HepG2 (cell line): ENCODE measurements at regions of chr6 and their contacts with region 1.

Region 1: GRCh38 chr6:31739639-31740396 is at the start of gene MSH5:
- DNase-seq: peak; percentile 100
- ATAC-seq: peak; percentile 74
- H3K4me3 ChIP-seq: peak within 1 kb of the TSS; percentile 44 to 92 (median 92)
- H3K27ac ChIP-seq: peak within 1 kb of the TSS; percentile 99
- H3K4me1 ChIP-seq: peaks cover 50% of the 10 kb centered on the region
- H3K27me3 ChIP-seq: no peaks in the 10 kb centered on the region; a peak in 1 of 5 replicates
- CTCF ChIP-seq: no peak
- EP300 ChIP-seq: no peak; a peak in 1 of 4 replicates
- POLR2A ChIP-seq: peak in 1 of 2 experiments; percentile 45; a peak in 2 of 4 replicates
- RAD21 ChIP-seq: peak; percentile 51
- total RNA-seq, gene MSH5: 2.5 and 10.2 TPM in 2 replicates

Region 2: GRCh38 chr6:31652925-31653718 is 86.7 kb before region 1 on chr6:
- CTCF ChIA-PET with region 1: no interaction called
- POLR2A ChIA-PET with region 1: interaction called, 67 read pairs
- in situ Hi-C with region 1: no loop called
- intact Hi-C with region 1: no loop called
- DNase-seq: peak; percentile 98
- ATAC-seq: peak; percentile 55
- H3K4me3 ChIP-seq: peak overlapping the region; percentile 73 to 88 (median 77)
- H3K27ac ChIP-seq: peak overlapping the region; percentile 96
- H3K4me1 ChIP-seq: peaks cover 70% of the 10 kb centered on the region
- H3K27me3 ChIP-seq: no peaks in the 10 kb centered on the region; a peak in 2 of 5 replicates
- CTCF ChIP-seq: peak; percentile 63
- EP300 ChIP-seq: no peak; a peak in 3 of 4 replicates
- POLR2A ChIP-seq: peak in 1 of 2 experiments; percentile 72; a peak in 1 of 4 replicates
- RAD21 ChIP-seq: 0 out of 2 replicates have a peak, but pooled peaks have one; percentile 7

Region 3: GRCh38 chr6:31702819-31703522 is 36.8 kb before region 1 on chr6 and contains the start of gene ABHD16A:
- CTCF ChIA-PET with region 1: no interaction called
- POLR2A ChIA-PET with region 1: interaction called, 57 read pairs
- in situ Hi-C with region 1: no loop called
- intact Hi-C with region 1: loop called (anchors 5 kb)
- DNase-seq: peak; percentile 98
- ATAC-seq: peak; percentile 93
- H3K4me3 ChIP-seq: peak within 1 kb of the TSS; percentile 71 to 84 (median 81)
- H3K27ac ChIP-seq: peak within 1 kb of the TSS; percentile 85
- H3K4me1 ChIP-seq: peaks cover 39% of the 10 kb centered on the region
- H3K27me3 ChIP-seq: peaks cover 0 to 3% of the 10 kb centered on the region in 2 experiments; a peak in 2 of 5 replicates
- CTCF ChIP-seq: peak; percentile 33
- EP300 ChIP-seq: peak; percentile 56 to 79; a peak in 3 of 4 replicates
- POLR2A ChIP-seq: peak; percentile 93 to 96
- RAD21 ChIP-seq: no peak
- total RNA-seq, gene ABHD16A: 16.2 and 43.5 TPM in 2 replicates

Region 4: DNA sequence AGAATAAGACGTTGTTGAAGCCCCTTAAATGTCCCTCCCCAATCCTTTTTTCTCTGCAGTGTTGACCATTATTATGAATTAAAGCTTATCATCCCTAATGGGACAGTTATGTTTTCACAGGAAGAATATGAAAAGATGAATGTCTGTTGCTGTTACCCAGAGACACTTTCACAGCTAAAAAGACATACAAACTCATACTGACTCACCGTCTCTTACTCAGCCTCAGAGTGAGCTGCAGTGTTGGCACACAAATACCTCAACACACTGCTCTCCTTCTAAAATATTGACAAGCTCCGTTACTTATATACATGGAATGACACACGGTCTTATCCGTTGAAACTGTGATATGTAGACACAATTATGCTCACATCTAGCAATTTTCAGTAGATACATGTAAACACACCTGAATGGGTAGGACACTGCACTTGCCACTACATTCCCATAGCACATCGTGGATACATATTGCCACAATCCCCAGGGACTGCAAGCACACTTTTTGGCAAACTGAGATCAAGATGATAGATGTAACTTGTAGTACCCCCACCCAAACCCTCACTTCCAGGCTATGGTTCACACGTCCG is 13.0 kb after region 1 on chr6:
- CTCF ChIA-PET with region 1: no interaction called
- POLR2A ChIA-PET with region 1: interaction called, 106 read pairs
- in situ Hi-C with region 1: no loop called
- intact Hi-C with region 1: no loop called
- DNase-seq: no peak
- ATAC-seq: peak; percentile 33; the same call in 1 of the 3 replicates
- H3K4me3 ChIP-seq: no peak overlapping the region
- H3K27ac ChIP-seq: no peak overlapping the region
- H3K4me1 ChIP-seq: peaks cover 11% of the 10 kb centered on the region
- H3K27me3 ChIP-seq: no peaks in the 10 kb centered on the region
- CTCF ChIP-seq: no peak
- EP300 ChIP-seq: no peak
- POLR2A ChIP-seq: no peak
- RAD21 ChIP-seq: no peak

Region 5: GRCh38 chr6:31795616-31796298 is 55.9 kb after region 1 on chr6 and contains the start of gene VARS1:
- CTCF ChIA-PET with region 1: no interaction called
- POLR2A ChIA-PET with region 1: interaction called, 47 read pairs
- in situ Hi-C with region 1: no loop called
- intact Hi-C with region 1: no loop called
- DNase-seq: peak; percentile 90
- ATAC-seq: peak; percentile 89
- H3K4me3 ChIP-seq: peak within 1 kb of the TSS; percentile 89 to 98 (median 98)
- H3K27ac ChIP-seq: peak within 1 kb of the TSS; percentile 76
- H3K4me1 ChIP-seq: peaks cover 25% of the 10 kb centered on the region
- H3K27me3 ChIP-seq: no peaks in the 10 kb centered on the region; a peak in 1 of 5 replicates
- CTCF ChIP-seq: peak; percentile 98
- EP300 ChIP-seq: no peak
- POLR2A ChIP-seq: peak in 1 of 2 experiments; percentile 46; a peak in 1 of 4 replicates
- RAD21 ChIP-seq: peak; percentile 97
- total RNA-seq, gene VARS1: 56.1 and 59.2 TPM in 2 replicates

Region 6: GRCh38 chr6:31827286-31828079 is 87.7 kb after region 1 on chr6 and contains the start of gene HSPA1B:
- CTCF ChIA-PET with region 1: no interaction called
- POLR2A ChIA-PET with region 1: interaction called, 102 read pairs
- in situ Hi-C with region 1: no loop called
- intact Hi-C with region 1: no loop called
- DNase-seq: peak; percentile 100
- ATAC-seq: peak; percentile 89
- H3K4me3 ChIP-seq: peak within 1 kb of the TSS; percentile 59 to 91 (median 86)
- H3K27ac ChIP-seq: peak within 1 kb of the TSS; percentile 68
- H3K4me1 ChIP-seq: peaks cover 44% of the 10 kb centered on the region
- H3K27me3 ChIP-seq: no peaks in the 10 kb centered on the region; a peak in 1 of 5 replicates
- CTCF ChIP-seq: peak; percentile 29
- EP300 ChIP-seq: peak in 1 of 2 experiments; percentile 82; a peak in 2 of 4 replicates
- POLR2A ChIP-seq: peak; percentile 100
- RAD21 ChIP-seq: peak; percentile 76
- total RNA-seq, gene HSPA1B: 186 and 189 TPM in 2 replicates

Region 7: DNA sequence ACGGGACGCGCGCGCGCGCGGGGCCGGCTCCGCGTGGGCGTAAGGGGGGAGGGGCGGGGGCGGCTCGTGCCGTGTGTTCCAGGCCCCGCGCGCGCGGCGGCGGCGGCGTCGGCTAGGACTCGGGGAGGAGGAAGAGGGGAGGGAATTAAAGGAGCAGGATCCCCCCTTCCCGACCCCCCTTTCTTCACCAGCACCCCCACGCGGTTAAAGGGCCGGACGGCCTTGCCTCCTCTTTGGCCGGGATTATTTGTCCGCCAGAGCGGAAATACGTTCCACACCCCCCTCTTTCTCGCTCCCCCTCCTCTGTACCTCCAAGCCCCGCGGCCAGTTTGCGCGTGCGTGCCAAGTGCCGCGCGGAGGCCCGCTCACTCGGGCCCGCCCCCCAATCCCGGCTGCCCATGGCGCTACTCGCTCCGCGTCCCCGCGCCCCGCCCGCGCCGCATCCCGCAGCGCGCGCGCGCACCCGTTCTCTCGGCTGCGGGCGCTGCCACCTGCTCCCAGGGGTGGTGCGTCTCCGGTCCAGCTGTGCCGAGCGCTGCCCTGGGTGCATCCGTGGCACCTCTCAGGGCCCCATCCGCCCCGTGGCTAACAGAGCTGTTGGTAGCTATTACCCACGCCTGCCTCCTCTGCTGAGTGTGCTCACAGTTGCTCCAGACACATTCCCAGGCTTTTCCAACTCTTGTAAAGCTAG is 162.3 kb after region 1 on chr6 and contains the start of gene ZBTB12:
- CTCF ChIA-PET with region 1: no interaction called
- POLR2A ChIA-PET with region 1: interaction called, 18 read pairs
- in situ Hi-C with region 1: no loop called
- intact Hi-C with region 1: no loop called
- DNase-seq: peak; percentile 96
- ATAC-seq: peak; percentile 76
- H3K4me3 ChIP-seq: peak within 1 kb of the TSS; percentile 65 to 78 (median 67)
- H3K27ac ChIP-seq: peak within 1 kb of the TSS; percentile 60
- H3K4me1 ChIP-seq: peaks cover 51% of the 10 kb centered on the region
- H3K27me3 ChIP-seq: peaks cover 1 to 13% of the 10 kb centered on the region in 2 experiments; a peak in 2 of 5 replicates
- CTCF ChIP-seq: peak; percentile 48
- EP300 ChIP-seq: peak in 1 of 2 experiments; percentile 30; a peak in 1 of 4 replicates
- POLR2A ChIP-seq: peak; percentile 58 to 78; a peak in 3 of 4 replicates
- RAD21 ChIP-seq: peak; percentile 88
- total RNA-seq, gene ZBTB12: 6.0 and 6.8 TPM in 2 replicates

Region 8: DNA sequence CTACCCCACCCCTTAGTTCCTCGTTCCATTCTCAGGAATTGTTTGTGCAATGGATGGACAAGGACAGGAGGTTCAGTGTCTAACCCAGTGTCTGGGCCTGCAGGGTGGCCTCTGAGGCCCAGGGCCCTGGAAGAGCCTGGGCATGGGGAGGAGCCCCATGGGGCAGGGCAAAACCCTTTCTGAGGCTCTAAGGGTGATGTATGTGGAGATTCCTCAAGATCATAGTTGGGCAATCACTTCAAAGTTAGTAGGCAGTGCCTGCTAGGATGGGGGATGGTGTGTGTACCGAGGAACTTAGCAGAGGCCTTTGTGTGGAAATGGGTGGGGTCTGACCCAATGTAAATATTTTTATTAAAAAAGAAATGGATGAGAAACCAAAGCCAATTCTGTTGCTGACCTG is 181.0 kb after region 1 on chr6:
- CTCF ChIA-PET with region 1: no interaction called
- POLR2A ChIA-PET with region 1: no interaction called
- in situ Hi-C with region 1: no loop called
- intact Hi-C with region 1: no loop called
- DNase-seq: no peak
- ATAC-seq: peak; percentile 25
- H3K4me3 ChIP-seq: no peak overlapping the region
- H3K27ac ChIP-seq: no peak overlapping the region
- H3K4me1 ChIP-seq: peaks cover 64% of the 10 kb centered on the region
- H3K27me3 ChIP-seq: no peaks in the 10 kb centered on the region
- CTCF ChIP-seq: no peak
- EP300 ChIP-seq: peak in 1 of 2 experiments; percentile 36; a peak in 1 of 4 replicates
- POLR2A ChIP-seq: no peak
- RAD21 ChIP-seq: no peak